ENCODE measurements at regions of chr17 and their contacts with region 1.

Region 1: GRCh38 chr17:17859909-17860765 is 23.4 kb upstream of the SREBF1 start:
- DNase-seq: peak in 5 of 6 donors; percentile 54 to 83 (median 72)
- ATAC-seq: peak; percentile 90 to 94 (median 93)
- H3K4me3 ChIP-seq: no peak overlapping the region
- H3K27ac ChIP-seq: no peak overlapping the region
- H3K4me1 ChIP-seq: peaks cover 0 to 10% (median 3%) of the 10 kb centered on the region in 3 donors
- H3K27me3 ChIP-seq: no peaks in the 10 kb centered on the region
- CTCF ChIP-seq: peak; percentile 88 to 93 (median 91)

Region 2: GRCh38 chr17:17675925-17676534 is 184.1 kb before region 1 on chr17:
- intact Hi-C with region 1: loop called in 1 of 3 experiments (anchors 10 kb)
- DNase-seq: no peak
- ATAC-seq: peak; percentile 13 to 56 (median 38)
- H3K4me3 ChIP-seq: no peak overlapping the region
- H3K27ac ChIP-seq: no peak overlapping the region
- H3K4me1 ChIP-seq: no peaks in the 10 kb centered on the region
- H3K27me3 ChIP-seq: no peaks in the 10 kb centered on the region
- CTCF ChIP-seq: no peak

Region 3: DNA sequence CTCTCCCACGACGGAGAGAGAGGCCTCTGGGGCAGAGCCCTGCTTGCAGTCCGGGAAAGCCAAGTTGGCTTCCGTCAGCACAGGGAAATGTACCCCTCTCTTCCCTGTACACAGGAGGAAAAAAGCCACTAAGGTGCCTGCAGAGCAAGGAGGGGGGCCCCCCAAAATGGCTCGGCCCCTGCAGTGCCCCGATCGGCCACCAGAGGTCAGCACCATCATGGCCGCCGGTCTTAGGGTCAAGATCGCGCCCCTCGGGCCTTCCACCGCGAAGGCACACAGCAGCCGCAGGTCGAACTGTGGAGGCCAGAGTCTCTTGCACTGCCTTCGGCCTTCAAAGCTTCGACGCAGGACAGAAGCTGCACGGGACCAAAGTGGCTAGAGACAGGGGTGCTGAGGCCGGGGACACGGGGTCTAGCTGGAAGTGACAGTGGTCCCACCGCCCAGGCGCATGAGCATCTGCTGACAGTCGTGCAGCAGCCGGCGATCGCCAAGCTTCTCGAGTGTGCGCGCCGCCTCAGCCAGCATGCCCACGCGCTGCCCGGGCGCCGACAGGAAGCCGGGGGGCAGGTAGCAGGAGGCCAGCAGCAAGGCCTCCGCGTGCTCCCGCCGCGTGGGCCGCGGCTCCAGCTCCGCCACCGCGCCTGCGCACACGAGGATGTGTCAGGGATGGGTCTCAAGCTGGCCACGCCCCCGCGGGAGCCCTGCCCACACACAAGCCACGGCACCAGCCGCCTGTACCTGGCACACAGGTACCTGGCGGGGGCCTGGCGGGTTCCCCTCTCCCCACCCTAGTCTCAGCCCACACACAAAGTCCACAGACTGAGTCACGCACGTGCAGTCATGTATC is 47.7 kb before region 1 on chr17:
- intact Hi-C with region 1: loop called in 2 of 3 experiments (anchors 2 to 5 kb)
- DNase-seq: peak; percentile 57 to 92 (median 77)
- ATAC-seq: peak; percentile 59 to 86 (median 75)
- H3K4me3 ChIP-seq: no peak overlapping the region
- H3K27ac ChIP-seq: peak overlapping the region in 2 of 4 donors; percentile 1 to 30
- H3K4me1 ChIP-seq: no peaks in the 10 kb centered on the region
- H3K27me3 ChIP-seq: no peaks in the 10 kb centered on the region
- CTCF ChIP-seq: peak; percentile 98 to 100 (median 98)

Region 4: GRCh38 chr17:17819561-17819995 is 40.6 kb before region 1 on chr17:
- intact Hi-C with region 1: loop called in 1 of 3 experiments (anchors 5 kb)
- DNase-seq: peak; percentile 51 to 86 (median 76)
- ATAC-seq: peak in 3 of 4 donors; percentile 8 to 37 (median 13)
- H3K4me3 ChIP-seq: no peak overlapping the region
- H3K27ac ChIP-seq: no peak overlapping the region
- H3K4me1 ChIP-seq: peaks cover 16 to 40% (median 24%) of the 10 kb centered on the region in 3 donors
- H3K27me3 ChIP-seq: no peaks in the 10 kb centered on the region
- CTCF ChIP-seq: no peak

Region 5: GRCh38 chr17:17919169-17920107 is 59.3 kb after region 1 on chr17:
- intact Hi-C with region 1: no loop called
- DNase-seq: peak in 4 of 6 donors; percentile 69 to 75 (median 72)
- ATAC-seq: peak; percentile 58 to 88 (median 82)
- H3K4me3 ChIP-seq: no peak overlapping the region
- H3K27ac ChIP-seq: no peak overlapping the region
- H3K4me1 ChIP-seq: peaks cover 0 to 18% (median 9%) of the 10 kb centered on the region in 3 donors
- H3K27me3 ChIP-seq: no peaks in the 10 kb centered on the region
- CTCF ChIP-seq: peak; percentile 10 to 63 (median 54)

Region 6: GRCh38 chr17:18141210-18141803 is 281.2 kb after region 1 on chr17:
- intact Hi-C with region 1: no loop called
- DNase-seq: no peak
- ATAC-seq: peak; percentile 55 to 89 (median 78)
- H3K4me3 ChIP-seq: no peak overlapping the region
- H3K27ac ChIP-seq: no peak overlapping the region
- H3K4me1 ChIP-seq: no peaks in the 10 kb centered on the region
- H3K27me3 ChIP-seq: no peaks in the 10 kb centered on the region
- CTCF ChIP-seq: peak; percentile 28 to 60 (median 54)

Measured in pancreas (tissue), 10 donors.